ENCODE measurements at regions of chr1 and their contacts with region 1.

Region 1: GRCh38 chr1:94619731-94620130 is 78.2 kb upstream of the F3 start:
- DNase-seq: no peak
- H3K4me3 Mint-ChIP-seq: no peak overlapping the region
- H3K27ac Mint-ChIP-seq: no peak overlapping the region
- H3K4me1 Mint-ChIP-seq: peaks cover 5% of the 10 kb centered on the region
- H3K27me3 Mint-ChIP-seq: peaks cover 2% of the 10 kb centered on the region

Region 2: GRCh38 chr1:94688646-94689045 is 68.9 kb after region 1 on chr1:
- CTCF ChIA-PET with region 1: no interaction called
- POLR2A ChIA-PET with region 1: no interaction called
- DNase-seq: no peak
- H3K4me3 Mint-ChIP-seq: no peak overlapping the region
- H3K27ac Mint-ChIP-seq: no peak overlapping the region
- H3K4me1 Mint-ChIP-seq: no peaks in the 10 kb centered on the region
- H3K27me3 Mint-ChIP-seq: peaks cover 2% of the 10 kb centered on the region

Region 3: DNA sequence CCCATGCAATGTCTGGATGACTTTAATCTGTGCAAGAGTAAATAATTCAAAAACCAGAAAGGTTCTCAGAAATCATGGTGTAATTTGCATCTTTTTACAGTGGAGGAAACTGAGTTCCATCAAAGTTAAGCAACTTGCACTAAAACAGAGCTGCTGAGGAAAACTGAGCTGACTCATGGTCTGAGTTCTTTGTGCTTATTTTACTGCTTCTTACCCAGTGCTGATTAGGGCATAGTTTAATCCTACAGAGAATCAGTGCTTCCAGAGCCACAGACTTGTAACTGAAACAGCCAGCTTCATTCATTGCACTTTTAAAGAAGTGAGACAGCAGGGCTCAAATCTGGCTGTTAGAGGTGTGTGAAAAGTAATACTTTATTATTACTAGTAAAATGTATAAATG is 603.4 kb after region 1 on chr1:
- CTCF ChIA-PET with region 1: no interaction called
- POLR2A ChIA-PET with region 1: interaction called, 13 read pairs
- DNase-seq: no peak
- H3K4me3 Mint-ChIP-seq: no peak overlapping the region
- H3K27ac Mint-ChIP-seq: no peak overlapping the region
- H3K4me1 Mint-ChIP-seq: no peaks in the 10 kb centered on the region
- H3K27me3 Mint-ChIP-seq: peaks cover 4% of the 10 kb centered on the region

Measured in activated CD4-positive, alpha-beta T cell treated with anti-CD3 and anti-CD28 coated beads, Interleukin-2, amount 10 ng/mL, durations not matched to agents 7 days and 5 days (primary cell).